ENCODE measurements at regions of chr16 and their contacts with region 1.

Region 1: DNA sequence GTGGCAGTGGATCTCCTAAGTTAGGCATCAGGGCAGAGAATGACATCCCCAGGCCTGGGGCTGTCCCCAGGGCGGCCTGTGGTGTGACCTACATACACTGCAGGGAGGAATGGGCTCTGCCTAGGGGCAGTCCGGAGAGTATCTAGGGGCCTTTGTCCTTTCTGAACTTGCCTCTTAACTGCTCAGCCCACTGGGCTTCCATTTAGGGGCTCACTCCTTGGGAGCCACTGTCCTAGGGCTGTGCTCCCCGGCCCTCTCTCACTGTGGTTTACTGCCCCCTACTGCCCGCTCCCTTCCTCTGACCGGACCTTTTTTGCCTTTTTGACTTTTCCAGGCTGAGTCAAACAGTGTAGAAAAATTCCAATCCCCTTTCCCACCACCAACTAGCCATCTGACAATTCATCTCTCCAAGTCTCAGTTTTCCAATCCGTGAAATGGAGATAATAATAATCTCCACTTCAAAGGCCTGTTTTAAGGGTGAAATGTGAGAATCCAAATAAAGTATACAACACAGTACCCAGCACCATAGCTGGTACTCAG is 66.8 kb downstream of the DNAH3 start:
- DNase-seq: peak in 41 of 42 donors; percentile 24 to 86 (median 66)

Region 2: DNA sequence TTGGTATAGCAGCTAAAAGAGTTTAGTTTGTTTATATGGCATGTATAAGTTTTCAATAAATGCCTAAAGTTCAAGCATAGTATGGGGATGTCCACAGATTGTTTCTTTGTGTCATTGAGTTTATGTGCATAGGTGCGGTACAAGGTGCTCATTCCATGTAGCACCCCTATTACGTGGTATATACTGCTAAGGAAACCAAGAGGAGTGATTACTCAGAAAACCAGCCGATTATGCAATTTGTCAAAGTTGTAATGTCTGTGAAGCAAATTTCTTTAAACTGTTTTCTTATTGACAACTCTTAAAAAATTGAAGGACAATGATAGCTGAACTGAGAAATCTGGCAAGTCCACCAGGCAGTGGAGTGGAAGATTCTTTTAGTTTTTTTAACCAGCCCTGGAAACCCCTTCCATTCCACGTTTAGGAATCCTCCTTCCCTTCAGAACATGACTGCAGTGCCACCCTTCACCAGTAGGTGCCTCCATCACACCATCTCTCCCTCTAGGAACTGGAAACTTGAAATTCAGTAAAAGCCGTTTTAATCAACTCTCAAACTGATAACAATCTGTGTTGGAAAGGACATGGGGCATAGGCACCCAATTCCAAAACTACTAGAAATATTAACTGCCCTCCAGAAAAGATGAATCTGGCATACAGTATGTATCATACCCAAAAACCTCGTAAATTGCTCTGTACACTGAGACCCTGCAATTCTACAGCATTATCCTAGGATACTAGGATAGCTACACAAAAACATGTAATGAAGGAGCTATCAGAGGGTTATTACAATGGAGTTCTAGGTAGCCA is 234.0 kb before region 1 on chr16:
- intact Hi-C with region 1: loop called (anchors 2 kb)
- DNase-seq: peak in 41 of 42 donors; percentile 51 to 92 (median 80)

Region 3: DNA sequence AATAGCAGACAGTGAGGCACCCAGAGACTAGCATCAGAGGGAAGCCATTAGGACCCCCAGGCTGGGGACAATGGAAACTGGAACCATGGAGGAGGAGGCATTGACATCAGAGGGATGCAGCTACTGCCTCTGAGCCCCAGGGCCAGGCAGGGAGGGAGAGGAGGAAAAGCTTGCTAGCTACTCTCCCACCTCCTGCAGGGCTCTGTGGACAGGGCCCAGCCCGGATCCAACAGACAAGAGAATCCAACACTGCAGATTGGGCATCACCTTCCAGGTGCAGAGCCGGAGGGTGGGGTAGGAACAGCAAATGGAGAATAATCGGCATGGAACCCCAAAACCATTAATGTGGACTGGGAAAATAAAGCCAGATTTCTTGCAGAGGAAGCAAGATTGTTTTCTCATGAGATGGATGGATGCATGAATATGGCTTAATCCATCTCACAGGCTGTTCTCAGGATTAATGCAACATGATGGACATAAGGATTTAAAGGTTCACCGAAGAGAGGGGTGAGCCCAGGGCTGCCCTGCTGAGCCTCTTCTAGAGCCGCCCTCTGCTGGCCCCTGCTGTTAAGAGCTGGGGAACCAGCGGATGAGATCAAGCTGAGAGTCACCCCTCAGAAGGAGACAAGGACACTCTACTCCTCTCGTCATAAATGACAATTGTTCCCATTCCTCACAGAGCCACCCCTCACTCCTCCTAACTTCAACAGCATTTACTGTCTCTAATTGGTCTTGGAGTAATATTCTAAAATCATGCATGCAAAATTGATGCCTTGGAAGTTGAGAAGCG is 18.0 kb after region 1 on chr16:
- intact Hi-C with region 1: no loop called
- DNase-seq: peak in 2 of 42 donors; percentile 8 to 26

Region 4: GRCh38 chr16:21184834-21185233 is 101.0 kb after region 1 on chr16:
- intact Hi-C with region 1: no loop called
- DNase-seq: no peak

Measured in head of caudate nucleus (tissue), 42 donors.